ENCODE measurements at regions of chr19 and their contacts with region 1.

Region 1: GRCh38 chr19:8005534-8006256 is at the start of gene ELAVL1:
- DNase-seq: peak; percentile 86
- H3K4me3 ChIP-seq: peak within 1 kb of the TSS; percentile 70
- H3K27ac ChIP-seq: peak within 1 kb of the TSS; percentile 69 to 74
- H3K4me1 ChIP-seq: peaks cover 19% of the 10 kb centered on the region
- H3K27me3 ChIP-seq: no peaks in the 10 kb centered on the region
- CTCF ChIP-seq: peak in 1 of 4 experiments; percentile 14
- POLR2A ChIP-seq: peak; percentile 32
- total RNA-seq, gene ELAVL1: 35.6 to 76.9 TPM

Region 2: DNA sequence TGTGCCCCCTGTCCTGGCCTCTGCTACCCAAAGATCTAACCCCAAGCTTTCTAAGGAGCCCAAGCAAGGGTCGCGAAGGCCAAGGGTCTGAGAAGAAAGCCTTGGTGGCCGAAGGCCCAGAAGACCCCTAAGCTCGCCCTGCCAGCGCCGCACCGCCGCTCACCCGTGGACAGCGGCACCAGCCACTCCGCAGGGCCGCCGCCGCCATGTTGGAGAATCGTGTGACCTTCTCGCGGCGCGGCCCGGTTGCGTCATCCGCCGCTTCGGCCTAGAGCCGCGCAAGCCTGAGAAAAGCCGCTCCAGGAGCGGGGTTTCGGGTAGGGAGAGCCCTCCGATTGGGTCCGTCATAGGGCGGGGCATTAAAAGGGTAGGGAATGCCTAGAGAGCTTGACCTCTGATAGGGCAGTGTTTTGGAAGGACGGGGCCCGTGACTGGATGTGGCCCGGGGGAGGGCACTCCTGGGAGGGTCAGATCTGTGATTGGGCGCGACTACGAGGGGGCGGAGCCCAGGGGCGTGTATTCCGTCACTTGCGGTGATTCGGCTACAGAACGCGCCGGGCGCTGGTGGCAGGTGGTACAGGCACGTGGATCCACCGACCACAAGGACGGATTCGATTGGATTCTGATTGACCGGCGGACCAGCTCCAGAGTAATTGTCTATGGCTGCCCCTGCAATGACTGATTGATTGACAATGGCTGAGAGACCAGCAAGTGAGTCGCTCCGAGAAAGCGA is 62.1 kb before region 1 on chr19 and contains the start of gene TIMM44:
- intact Hi-C with region 1: loop called (anchors 5 kb)
- DNase-seq: peak; percentile 99
- H3K4me3 ChIP-seq: peak within 1 kb of the TSS; percentile 89 to 93
- H3K27ac ChIP-seq: peak within 1 kb of the TSS; percentile 95 to 97
- H3K4me1 ChIP-seq: no peaks in the 10 kb centered on the region
- H3K27me3 ChIP-seq: no peaks in the 10 kb centered on the region
- CTCF ChIP-seq: no peak
- POLR2A ChIP-seq: peak; percentile 66
- total RNA-seq, gene TIMM44: 47.3 to 83.4 TPM

Region 3: DNA sequence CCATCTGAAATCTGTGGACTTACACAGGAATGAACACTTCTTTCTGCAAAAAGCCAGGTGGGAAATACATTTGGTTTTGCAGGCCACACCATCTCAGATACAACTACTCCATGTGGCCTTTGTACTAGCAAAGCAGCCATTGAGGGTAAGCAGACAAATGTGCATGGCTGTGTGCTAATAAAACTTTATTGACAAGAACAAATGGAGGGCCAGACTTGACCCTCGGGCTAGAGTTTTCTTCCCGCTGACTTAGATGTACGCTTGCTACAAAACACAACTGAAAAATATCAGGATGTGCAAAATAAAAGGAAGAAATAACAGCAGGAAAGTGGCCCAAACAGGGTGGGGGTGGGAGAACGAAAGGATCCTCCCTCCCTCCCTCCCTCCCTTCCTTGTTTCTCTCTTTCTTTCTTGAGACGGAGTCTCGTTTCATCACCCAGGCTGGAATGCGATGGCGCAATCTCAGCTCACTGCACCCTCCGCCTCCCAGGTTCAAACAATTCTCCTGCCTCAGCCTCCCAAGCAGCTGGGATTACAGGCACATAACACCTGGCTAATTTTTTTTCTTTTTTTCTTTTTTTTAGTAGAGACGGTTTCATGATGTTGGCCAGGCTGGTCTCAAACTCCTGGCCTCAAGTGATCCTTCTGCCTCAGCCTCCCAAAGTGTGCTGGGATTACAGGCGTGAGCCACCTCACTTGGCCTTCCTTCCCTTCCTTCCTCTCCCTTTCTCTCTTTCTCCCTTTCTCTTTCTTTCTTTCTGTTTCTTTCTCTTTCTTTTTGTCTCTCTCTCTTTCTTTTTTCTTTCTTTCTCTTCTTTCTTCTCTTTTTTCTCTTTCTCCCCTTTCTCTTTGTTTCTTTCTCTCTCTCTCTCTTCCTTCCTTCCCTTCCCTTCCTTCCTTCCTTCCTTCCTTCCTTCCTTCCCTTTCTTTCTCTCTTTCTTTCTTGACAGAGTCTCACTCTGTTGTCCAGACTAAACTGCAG is 76.2 kb after region 1 on chr19:
- intact Hi-C with region 1: no loop called
- DNase-seq: no peak
- H3K4me3 ChIP-seq: no peak overlapping the region
- H3K27ac ChIP-seq: no peak overlapping the region
- H3K4me1 ChIP-seq: no peaks in the 10 kb centered on the region
- H3K27me3 ChIP-seq: no peaks in the 10 kb centered on the region
- CTCF ChIP-seq: no peak
- POLR2A ChIP-seq: no peak

Region 4: DNA sequence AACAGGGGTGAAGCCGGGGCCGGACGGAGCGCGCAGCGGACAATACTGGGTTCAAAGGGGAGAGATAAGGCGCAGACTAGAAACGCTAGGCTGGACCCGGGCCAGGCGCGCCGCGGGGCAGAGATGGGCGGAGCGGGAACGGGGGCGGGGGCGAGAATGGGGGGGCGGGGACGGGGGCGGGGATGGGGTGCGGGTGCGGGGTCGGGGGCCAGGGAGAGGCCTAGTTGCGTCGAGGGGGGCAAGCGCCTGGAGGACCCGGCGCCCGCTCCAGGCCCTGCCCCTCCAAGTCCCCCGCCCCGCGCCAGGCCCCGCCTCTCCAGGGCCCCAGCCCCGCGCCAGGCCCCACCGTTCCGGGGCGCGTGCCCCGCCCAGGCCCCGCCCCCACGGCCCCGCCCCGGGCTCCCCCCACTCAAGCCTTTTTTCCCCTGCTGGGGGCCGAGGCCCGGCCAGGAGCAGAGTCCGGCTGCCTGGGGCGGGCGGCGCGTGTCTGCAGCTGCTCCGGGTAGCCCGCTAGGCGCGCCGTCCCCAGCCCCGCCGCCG is 203.3 kb after region 1 on chr19 and contains the start of gene CERS4:
- intact Hi-C with region 1: no loop called
- DNase-seq: peak; percentile 76
- H3K4me3 ChIP-seq: peak within 1 kb of the TSS; percentile 82 to 98
- H3K27ac ChIP-seq: peak within 1 kb of the TSS; percentile 92 to 93
- H3K4me1 ChIP-seq: peaks cover 15% of the 10 kb centered on the region
- H3K27me3 ChIP-seq: no peaks in the 10 kb centered on the region
- CTCF ChIP-seq: no peak
- POLR2A ChIP-seq: no peak
- total RNA-seq, gene CERS4: 170 to 176 TPM

Measured in prostate gland (tissue), 2 donors.